Sigmoid colon (tissue), 7 donors: ENCODE measurements at regions of chr19 and their contacts with region 1.

Region 1: DNA sequence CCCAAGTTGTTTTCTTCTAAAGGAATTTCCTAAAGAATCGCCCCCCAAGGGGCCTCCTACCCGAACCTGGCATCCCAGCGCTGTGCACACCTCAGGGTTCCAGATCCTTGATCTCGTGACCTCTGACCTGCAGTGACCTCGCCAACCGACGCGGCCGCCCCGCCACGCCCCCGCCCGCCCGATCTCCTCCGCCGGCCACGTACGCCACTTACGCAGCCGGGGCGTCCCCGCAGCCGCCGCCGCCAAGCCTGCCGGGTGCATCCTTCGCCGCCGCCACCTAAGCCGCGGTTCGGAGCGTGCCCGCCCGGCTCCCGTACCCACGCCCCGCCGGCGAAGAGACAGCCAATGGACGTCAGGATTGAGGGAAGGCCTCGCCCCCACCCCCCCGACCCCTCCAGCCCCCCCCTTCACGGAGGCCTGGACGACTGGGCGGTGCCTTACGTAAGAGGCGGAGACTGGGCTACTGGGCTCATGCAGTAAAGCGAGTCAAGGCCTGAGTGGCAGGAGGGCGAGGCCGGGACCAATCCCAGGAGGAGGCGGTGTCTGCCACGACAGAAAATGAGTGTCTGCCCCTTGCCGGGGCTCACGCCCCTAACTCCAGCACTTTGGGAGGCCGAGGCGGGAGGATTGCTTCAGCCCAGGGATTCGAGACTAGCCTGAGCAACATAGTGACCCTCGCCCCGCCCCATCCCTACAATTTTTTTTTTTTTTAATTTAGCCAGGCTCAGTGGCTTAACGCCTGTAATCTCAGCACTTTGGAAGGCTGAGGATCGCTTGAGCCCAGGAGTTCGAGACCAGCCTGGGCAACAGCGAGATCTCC is at the start of gene YIF1B:
- DNase-seq: peak; percentile 99
- H3K4me3 ChIP-seq: peak within 1 kb of the TSS; percentile 45 to 74 (median 62)
- H3K27ac ChIP-seq: peak within 1 kb of the TSS; percentile 81 to 98 (median 90)
- H3K4me1 ChIP-seq: peaks cover 0 to 45% (median 36%) of the 10 kb centered on the region in 4 donors
- H3K27me3 ChIP-seq: no peaks in the 10 kb centered on the region
- CTCF ChIP-seq: no peak
- EP300 ChIP-seq: peak in 1 of 4 donors; percentile 13
- POLR2A ChIP-seq: peak in 1 of 2 donors; percentile 21
- total RNA-seq, gene YIF1B: 12.5 to 22.5 (median 15.8) TPM

Region 2: GRCh38 chr19:38277969-38278680 is 37.7 kb before region 1 on chr19:
- intact Hi-C with region 1: loop called (anchors 2 kb)
- DNase-seq: no peak
- H3K4me3 ChIP-seq: no peak overlapping the region
- H3K27ac ChIP-seq: peak overlapping the region; percentile 61 to 82 (median 70)
- H3K4me1 ChIP-seq: peaks cover 0 to 56% (median 51%) of the 10 kb centered on the region in 4 donors
- H3K27me3 ChIP-seq: no peaks in the 10 kb centered on the region
- CTCF ChIP-seq: no peak
- EP300 ChIP-seq: peak in 2 of 4 donors; percentile 24 to 55
- POLR2A ChIP-seq: no peak